Breast epithelium (tissue), 4 donors: ENCODE measurements at regions of chr1 and their contacts with region 1.

Region 1: DNA sequence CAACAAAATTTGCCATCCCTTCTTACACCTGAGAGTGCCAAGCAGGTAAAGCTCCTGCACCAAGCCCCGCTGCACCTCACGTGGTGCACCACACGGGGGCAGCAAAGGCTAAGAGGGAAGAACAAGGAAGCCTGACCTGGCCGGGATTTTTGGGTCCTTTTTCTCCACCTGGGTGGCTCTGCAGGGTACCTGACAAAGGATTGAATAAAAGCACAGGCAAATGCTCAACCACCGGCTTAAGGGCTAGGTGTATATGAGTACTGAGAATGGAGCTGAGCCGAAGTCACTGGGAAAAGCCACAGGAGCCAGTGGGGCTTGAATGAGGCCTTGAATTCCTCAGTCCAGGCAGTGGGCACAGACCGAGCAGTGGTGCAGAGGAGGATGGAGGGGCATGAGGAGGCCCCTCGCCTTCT is 36.4 kb downstream of the ZNF697 start:
- DNase-seq: peak; percentile 83 to 91
- H3K4me3 ChIP-seq: no peak overlapping the region
- H3K27ac ChIP-seq: no peak overlapping the region
- H3K4me1 ChIP-seq: no peaks in the 10 kb centered on the region
- H3K27me3 ChIP-seq: no peaks in the 10 kb centered on the region
- CTCF ChIP-seq: peak; percentile 87 to 93 (median 91)
- POLR2A ChIP-seq: no peak

Region 2: GRCh38 chr1:119647734-119648619 is 36.3 kb after region 1 on chr1 and contains the start of gene ZNF697:
- intact Hi-C with region 1: no loop called
- DNase-seq: peak; percentile 95 to 97
- H3K4me3 ChIP-seq: peak within 1 kb of the TSS; percentile 63 to 99 (median 89)
- H3K27ac ChIP-seq: peak within 1 kb of the TSS; percentile 91 to 98
- H3K4me1 ChIP-seq: peaks cover 0 to 3% of the 10 kb centered on the region in 2 donors
- H3K27me3 ChIP-seq: no peaks in the 10 kb centered on the region
- CTCF ChIP-seq: peak in 2 of 3 donors; percentile 8 to 50
- POLR2A ChIP-seq: no peak
- total RNA-seq, gene ZNF697: 4.2 to 9.5 (median 7.0) TPM

Region 3: GRCh38 chr1:119674111-119674526 is 62.4 kb after region 1 on chr1:
- intact Hi-C with region 1: loop called (anchors 2 kb)
- DNase-seq: peak in 1 of 2 donors; percentile 37
- H3K4me3 ChIP-seq: no peak overlapping the region
- H3K27ac ChIP-seq: peak overlapping the region; percentile 80 to 82
- H3K4me1 ChIP-seq: no peaks in the 10 kb centered on the region
- H3K27me3 ChIP-seq: no peaks in the 10 kb centered on the region
- CTCF ChIP-seq: no peak
- POLR2A ChIP-seq: no peak